ENCODE measurements at regions of chr5 and their contacts with region 1.

Region 1: GRCh38 chr5:6377905-6378765 is at the start of gene MED10:
- DNase-seq: peak; percentile 88
- H3K4me3 ChIP-seq: peak within 1 kb of the TSS; percentile 51 to 76 (median 71)
- H3K27ac ChIP-seq: peak within 1 kb of the TSS; percentile 86
- H3K4me1 ChIP-seq: peaks cover 28% of the 10 kb centered on the region
- H3K27me3 ChIP-seq: no peaks in the 10 kb centered on the region
- CTCF ChIP-seq: no peak
- POLR2A ChIP-seq: peak; percentile 87
- total RNA-seq, gene MED10: 55.6 and 57.8 TPM in 2 replicates

Region 2: GRCh38 chr5:6419340-6419852 is 41.3 kb after region 1 on chr5:
- CTCF ChIA-PET with region 1: interaction called, 6 read pairs
- POLR2A ChIA-PET with region 1: no interaction called
- dilution Hi-C with region 1: no loop called
- intact Hi-C with region 1: loop called (anchors 1 kb)
- DNase-seq: peak; percentile 89
- H3K4me3 ChIP-seq: no peak overlapping the region
- H3K27ac ChIP-seq: peak overlapping the region; percentile 74
- H3K4me1 ChIP-seq: peaks cover 45% of the 10 kb centered on the region
- H3K27me3 ChIP-seq: no peaks in the 10 kb centered on the region
- CTCF ChIP-seq: no peak
- POLR2A ChIP-seq: no peak

Region 3: DNA sequence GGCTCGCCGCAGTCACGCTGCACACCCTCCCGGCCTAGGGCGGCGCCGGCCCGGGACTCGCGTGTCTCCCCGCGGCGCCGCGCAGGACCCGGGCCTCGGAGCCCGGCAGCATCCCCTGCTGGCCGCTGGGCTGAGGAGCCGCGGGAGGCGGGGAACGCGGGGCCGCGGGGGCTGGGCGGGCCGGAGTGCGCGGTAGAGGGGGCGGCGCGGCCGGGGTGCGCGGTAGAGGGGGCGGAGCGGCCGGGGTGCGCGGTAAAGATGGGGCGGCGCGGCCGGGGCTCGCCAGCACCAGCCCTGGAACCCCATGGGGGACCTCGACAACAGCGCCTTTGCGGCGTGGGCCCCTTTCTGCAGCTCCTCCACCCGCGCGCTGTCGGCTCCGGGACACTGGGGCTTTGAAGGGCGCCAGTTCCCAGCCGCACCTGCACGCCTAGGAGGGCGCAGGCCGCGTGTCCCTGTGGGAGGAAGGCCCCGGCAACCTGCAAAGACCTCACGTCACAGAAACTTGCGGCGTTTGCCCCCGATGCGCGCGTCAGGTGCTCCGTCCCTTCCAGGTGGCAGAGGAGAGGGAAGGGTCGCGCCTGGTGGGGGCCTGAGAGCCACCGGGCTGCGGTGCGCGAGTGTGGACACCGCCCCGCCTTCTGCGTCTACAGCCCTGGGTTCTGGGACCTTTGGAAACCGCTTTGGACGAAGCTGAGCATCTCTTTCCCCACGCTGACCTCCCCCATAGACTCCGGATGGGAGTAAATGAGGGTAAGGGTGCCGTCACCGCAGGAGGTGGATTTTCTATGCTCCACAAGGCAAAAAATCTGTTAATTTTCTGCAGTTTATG is 205.1 kb after region 1 on chr5:
- CTCF ChIA-PET with region 1: no interaction called
- POLR2A ChIA-PET with region 1: no interaction called
- dilution Hi-C with region 1: no loop called
- intact Hi-C with region 1: loop called (anchors 10 kb)
- DNase-seq: no peak
- H3K4me3 ChIP-seq: peak overlapping the region in 1 of 3 experiments; percentile 11
- H3K27ac ChIP-seq: no peak overlapping the region
- H3K4me1 ChIP-seq: peaks cover 13% of the 10 kb centered on the region
- H3K27me3 ChIP-seq: peaks cover 25 to 30% of the 10 kb centered on the region in 2 experiments
- CTCF ChIP-seq: peak; percentile 35 to 41
- POLR2A ChIP-seq: no peak

Measured in endothelial cell of umbilical vein (primary cell).